ENCODE measurements at regions of chr9 and their contacts with region 1.

Region 1: DNA sequence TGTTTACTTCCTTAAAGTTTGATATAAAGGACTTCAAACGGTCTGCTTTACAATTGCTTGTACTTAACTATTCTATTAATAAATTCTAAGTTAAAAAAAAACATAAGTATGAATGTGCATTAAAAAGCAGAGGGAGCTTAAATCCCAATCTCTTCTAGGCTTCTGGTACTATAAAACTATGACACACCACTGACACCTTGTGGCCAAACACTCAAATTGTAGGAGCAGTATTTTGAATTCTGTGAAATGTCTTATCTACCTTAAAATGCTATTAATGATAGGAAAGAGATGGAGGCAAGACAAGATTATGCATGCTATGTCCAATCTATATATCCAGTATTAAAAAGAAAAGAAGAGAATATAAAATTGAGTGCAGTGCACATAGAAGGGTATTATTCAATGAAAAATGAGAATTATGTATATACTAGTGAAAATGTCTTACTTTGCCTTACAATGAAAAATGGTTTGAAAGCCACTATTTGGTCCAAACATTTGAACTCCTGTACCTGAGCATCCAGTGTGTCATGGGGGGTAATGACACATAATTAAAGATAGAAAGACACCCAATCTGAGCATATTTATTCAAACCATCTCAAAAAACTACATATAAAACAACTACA is 87.6 kb downstream of the ERP44 start:
- DNase-seq: peak; percentile 66
- ATAC-seq: peak; percentile 38
- H3K4me3 ChIP-seq: no peak overlapping the region
- H3K27ac ChIP-seq: no peak overlapping the region
- H3K4me1 ChIP-seq: no peaks in the 10 kb centered on the region
- H3K27me3 ChIP-seq: no peaks in the 10 kb centered on the region
- CTCF ChIP-seq: peak; percentile 67

Region 2: DNA sequence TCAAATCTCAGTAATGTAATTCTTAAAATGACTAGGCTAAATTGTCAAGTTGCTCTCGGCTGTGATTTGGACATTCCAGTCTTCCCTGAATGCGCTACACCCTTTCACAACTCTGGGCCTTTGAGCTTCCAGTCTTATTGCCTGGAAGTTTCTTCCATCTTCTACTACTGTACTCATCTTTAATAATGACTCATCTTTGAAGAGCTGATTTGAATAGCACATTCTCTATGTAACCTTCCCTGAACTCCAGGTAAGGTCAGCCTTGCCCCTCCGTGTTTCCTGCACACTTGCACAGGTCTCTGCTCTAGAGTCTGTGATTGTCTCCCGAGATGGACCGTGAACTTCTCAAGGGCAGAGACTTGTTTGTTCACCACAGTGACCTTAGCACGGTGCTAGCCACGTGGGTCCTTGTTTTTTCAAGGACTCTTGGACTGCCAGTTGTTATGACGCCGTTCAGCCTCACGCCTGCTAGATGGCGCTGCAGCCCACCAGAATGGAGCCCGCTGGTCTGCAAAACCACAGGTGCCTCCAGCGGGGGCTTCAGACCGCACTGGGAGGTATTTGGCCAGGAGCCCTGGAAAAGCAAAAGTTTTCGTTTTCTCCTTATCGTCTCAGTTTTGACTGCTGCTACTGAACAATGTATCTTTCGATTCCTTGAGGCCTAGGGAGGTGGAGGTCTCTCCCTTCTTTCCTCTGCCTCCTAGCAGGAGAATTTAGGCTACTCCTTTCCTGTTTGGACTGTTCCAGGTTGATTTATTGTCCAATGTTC is 744.7 kb before region 1 on chr9:
- CTCF ChIA-PET with region 1: no interaction called
- POLR2A ChIA-PET with region 1: no interaction called
- intact Hi-C with region 1: loop called (anchors 5 kb)
- DNase-seq: peak; percentile 53
- ATAC-seq: peak; percentile 31; the same call in 1 of the 2 replicates
- H3K4me3 ChIP-seq: no peak overlapping the region
- H3K27ac ChIP-seq: no peak overlapping the region
- H3K4me1 ChIP-seq: peaks cover 3% of the 10 kb centered on the region; the same call in 1 of the 2 replicates
- H3K27me3 ChIP-seq: no peaks in the 10 kb centered on the region
- CTCF ChIP-seq: peak; percentile 82

Region 3: DNA sequence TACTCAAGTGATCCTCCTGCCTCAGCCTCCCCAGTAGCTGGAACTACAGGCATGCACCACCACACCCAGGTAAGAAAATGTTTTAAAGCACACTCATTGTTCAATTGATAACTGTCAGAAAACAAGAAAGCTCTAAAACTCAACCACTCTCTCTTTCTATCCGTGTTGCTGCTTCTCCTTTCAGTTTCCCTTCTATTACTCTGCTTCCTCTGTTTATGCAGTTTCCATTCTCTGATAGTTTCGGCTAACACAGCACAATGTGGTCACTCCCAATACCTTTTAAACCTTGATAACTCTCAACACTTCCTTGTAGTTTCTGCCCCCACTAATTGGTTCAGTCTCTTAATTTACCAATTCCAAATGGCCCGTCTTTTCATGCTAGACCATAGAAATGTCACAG is 248.7 kb before region 1 on chr9:
- CTCF ChIA-PET with region 1: no interaction called
- POLR2A ChIA-PET with region 1: no interaction called
- intact Hi-C with region 1: no loop called
- DNase-seq: no peak
- ATAC-seq: no peak
- H3K4me3 ChIP-seq: no peak overlapping the region
- H3K27ac ChIP-seq: no peak overlapping the region
- H3K4me1 ChIP-seq: no peaks in the 10 kb centered on the region
- H3K27me3 ChIP-seq: peaks cover 20% of the 10 kb centered on the region
- CTCF ChIP-seq: no peak

Region 4: DNA sequence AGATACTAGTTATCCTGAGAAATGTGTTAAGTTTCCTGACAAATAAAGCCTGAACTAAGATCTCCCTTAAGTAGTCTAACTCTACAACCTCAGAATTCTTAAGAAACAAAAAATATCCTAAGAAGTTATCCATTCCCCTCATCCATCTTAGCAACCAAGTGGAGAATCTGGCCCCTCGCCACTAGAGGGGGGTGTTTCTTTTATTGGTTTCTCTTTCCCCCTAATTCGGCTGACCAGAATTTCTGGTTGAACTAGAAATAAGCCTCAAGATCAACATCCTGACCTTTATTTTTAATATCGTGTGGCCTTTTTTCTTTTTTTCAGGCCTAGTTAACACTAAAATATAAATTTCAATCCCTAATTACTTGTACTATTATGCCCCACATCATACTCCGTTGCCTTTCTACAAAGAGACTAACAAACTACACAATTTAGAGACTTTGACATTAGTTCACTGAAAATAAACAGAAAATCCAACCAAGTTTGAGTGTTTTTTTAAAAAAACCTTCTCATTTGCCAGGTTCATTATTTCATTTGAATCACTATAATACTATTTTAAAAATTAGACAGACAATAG is 203.8 kb before region 1 on chr9:
- CTCF ChIA-PET with region 1: no interaction called
- POLR2A ChIA-PET with region 1: no interaction called
- intact Hi-C with region 1: loop called (anchors 5 kb)
- DNase-seq: peak; percentile 78
- ATAC-seq: peak; percentile 45; the same call in 1 of the 2 replicates
- H3K4me3 ChIP-seq: no peak overlapping the region
- H3K27ac ChIP-seq: no peak overlapping the region
- H3K4me1 ChIP-seq: peaks cover 8% of the 10 kb centered on the region
- H3K27me3 ChIP-seq: no peaks in the 10 kb centered on the region
- CTCF ChIP-seq: peak; percentile 79

Region 5: DNA sequence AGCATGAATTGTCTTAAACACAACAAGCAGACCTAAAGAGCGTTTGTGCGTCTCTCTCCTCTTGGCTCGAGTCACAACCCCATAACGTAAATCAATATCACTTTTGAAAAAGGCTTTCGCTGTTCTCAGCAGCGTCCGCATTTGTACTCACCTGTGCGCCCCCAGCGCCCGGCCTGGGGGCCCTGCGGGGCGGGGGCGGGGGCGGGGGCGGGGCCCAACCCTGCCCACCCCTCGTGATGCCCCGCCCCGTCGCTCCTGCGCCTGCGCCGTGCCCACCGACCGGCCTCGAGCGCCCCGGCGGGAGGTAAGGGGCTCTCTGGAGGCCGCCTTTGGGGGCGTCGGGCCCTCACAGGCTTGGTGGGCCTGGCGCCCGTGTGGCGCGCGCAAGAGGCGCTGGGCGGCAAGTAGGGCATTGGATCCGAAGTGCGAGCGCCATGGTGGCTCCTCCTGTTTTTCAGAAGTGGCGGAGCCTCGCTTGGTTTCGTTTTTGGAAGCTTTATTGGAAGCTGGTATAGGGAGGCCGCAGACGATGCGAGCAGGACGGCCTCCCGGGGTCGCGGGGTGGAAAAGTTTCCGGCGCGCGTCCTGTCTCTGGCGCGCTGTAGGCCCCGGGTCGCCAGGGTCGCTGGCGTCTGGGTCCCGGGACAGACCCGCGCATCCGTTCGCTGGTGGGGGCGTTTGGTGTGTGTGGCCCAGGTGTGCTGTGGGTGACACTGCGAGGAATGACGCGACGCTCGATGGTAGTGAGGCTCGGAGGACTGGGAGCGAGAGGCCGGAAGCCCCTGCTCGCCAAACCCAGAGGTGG is 104.6 kb before region 1 on chr9 and contains the start of gene STX17:
- CTCF ChIA-PET with region 1: no interaction called
- POLR2A ChIA-PET with region 1: no interaction called
- intact Hi-C with region 1: loop called (anchors 10 kb)
- DNase-seq: peak; percentile 60
- ATAC-seq: peak; percentile 82
- H3K4me3 ChIP-seq: peak within 1 kb of the TSS; percentile 85
- H3K27ac ChIP-seq: peak within 1 kb of the TSS; percentile 69
- H3K4me1 ChIP-seq: peaks cover 9% of the 10 kb centered on the region; the same call in 1 of the 2 replicates
- H3K27me3 ChIP-seq: no peaks in the 10 kb centered on the region
- CTCF ChIP-seq: no peak
- total RNA-seq, gene STX17: 12.8 TPM in 2 replicates